Sigmoid colon (tissue), 7 donors: ENCODE measurements at regions of chr6 and their contacts with region 1.

Region 1: GRCh38 chr6:57089687-57090460 is at the start of gene ZNF451:
- DNase-seq: peak; percentile 99
- H3K4me3 ChIP-seq: peak within 1 kb of the TSS; percentile 50 to 61 (median 56)
- H3K27ac ChIP-seq: peak within 1 kb of the TSS; percentile 85 to 90 (median 88)
- H3K4me1 ChIP-seq: peaks cover 0 to 42% (median 31%) of the 10 kb centered on the region in 4 donors
- H3K27me3 ChIP-seq: no peaks in the 10 kb centered on the region
- CTCF ChIP-seq: no peak
- EP300 ChIP-seq: peak in 1 of 4 donors; percentile 67
- POLR2A ChIP-seq: peak; percentile 81 to 92
- total RNA-seq, gene ZNF451: 56.6 to 70.1 (median 62.9) TPM

Region 2: DNA sequence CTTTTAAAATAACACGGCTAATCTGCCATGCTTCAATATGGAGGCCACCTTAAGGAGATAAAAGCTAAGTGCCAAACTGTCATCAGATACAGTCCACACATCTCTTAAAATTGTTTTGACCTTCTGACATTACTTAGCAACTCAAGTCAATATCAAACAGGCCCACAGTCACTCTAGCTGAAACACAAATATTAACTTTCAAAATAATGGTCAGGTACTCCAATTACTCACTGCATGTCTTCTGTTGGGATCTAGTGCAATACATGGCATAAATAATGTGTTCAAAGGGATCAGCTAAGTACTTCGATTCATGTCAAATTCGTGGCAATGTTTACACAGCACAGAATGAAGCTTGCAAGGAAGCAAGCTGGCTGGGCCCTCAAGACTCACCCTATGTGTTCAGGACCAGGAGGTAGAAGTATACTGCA is 268.9 kb before region 1 on chr6:
- intact Hi-C with region 1: no loop called
- DNase-seq: no peak
- H3K4me3 ChIP-seq: no peak overlapping the region
- H3K27ac ChIP-seq: peak overlapping the region in 1 of 4 donors; percentile 19
- H3K4me1 ChIP-seq: peaks cover 0 to 41% (median 22%) of the 10 kb centered on the region in 4 donors
- H3K27me3 ChIP-seq: no peaks in the 10 kb centered on the region
- CTCF ChIP-seq: no peak
- EP300 ChIP-seq: no peak
- POLR2A ChIP-seq: no peak

Region 3: GRCh38 chr6:57048577-57048976 is 41.3 kb before region 1 on chr6:
- intact Hi-C with region 1: loop called (anchors 5 kb)
- DNase-seq: no peak
- H3K4me3 ChIP-seq: peak overlapping the region in 1 of 4 donors; percentile 13
- H3K27ac ChIP-seq: peak overlapping the region in 2 of 4 donors; percentile 64 to 72
- H3K4me1 ChIP-seq: peaks cover 0 to 27% (median 18%) of the 10 kb centered on the region in 4 donors
- H3K27me3 ChIP-seq: no peaks in the 10 kb centered on the region
- CTCF ChIP-seq: no peak
- EP300 ChIP-seq: no peak
- POLR2A ChIP-seq: no peak